A549 (cell line): ENCODE measurements at regions of chr7 and their contacts with region 1.

Region 1: DNA sequence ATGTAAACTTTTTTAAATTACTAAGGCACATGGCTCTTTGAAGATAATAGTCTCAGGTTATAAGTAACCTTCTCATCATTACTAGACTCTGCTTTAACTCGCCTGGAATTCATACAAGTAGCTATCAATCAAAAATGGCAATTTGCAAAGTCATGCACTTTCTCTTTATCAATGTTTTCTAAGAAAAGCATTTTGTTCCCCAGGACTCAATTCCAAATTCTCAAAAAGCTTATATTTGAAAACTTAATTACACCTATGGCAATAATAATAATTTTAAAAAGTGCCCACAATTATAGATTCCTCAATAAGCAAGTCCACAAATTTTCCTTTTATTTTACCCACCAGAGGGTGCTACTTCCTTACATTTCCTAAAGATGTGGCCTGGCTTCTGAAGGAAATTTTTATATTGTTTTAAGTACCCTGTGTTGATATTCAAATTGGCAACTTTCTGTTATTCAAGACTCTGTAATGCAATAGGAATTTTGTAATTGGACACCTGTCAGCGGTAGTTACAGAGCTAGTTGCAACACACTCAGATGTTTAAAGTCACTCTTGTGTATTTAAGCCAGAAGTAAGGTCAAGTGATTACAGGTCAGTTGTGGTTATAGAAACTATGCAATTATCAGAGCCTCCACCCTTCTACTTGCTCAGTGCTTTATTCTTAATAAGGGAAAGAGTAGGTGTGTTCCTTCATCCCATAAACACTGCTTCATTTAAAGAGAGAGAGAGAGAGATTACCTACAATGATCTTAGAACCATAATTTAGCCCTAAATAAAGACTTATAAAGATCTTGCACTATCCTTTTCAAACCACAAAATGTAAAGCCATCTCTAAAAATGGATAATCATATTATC is 47.1 kb upstream of the HYAL4 start:
- DNase-seq: peak; percentile 7 to 54
- ATAC-seq: peak; percentile 66 to 86
- H3K4me3 ChIP-seq: no peak overlapping the region
- H3K27ac ChIP-seq: no peak overlapping the region
- H3K4me1 ChIP-seq: peaks cover 4% of the 10 kb centered on the region; the same call in 1 of the 3 replicates
- CTCF ChIP-seq: peak; percentile 87
- EP300 ChIP-seq: no peak
- POLR2A ChIP-seq: no peak
- RAD21 ChIP-seq: peak; percentile 81 to 89

Region 2: GRCh38 chr7:123748734-123749536 is 49.0 kb before region 1 on chr7 and contains the start of gene WASL:
- CTCF ChIA-PET with region 1: interaction called, 12 read pairs
- POLR2A ChIA-PET with region 1: no interaction called
- DNase-seq: peak; percentile 73 to 94
- ATAC-seq: peak; percentile 80 to 88
- H3K4me3 ChIP-seq: peak within 1 kb of the TSS; percentile 97
- H3K27ac ChIP-seq: peak within 1 kb of the TSS; percentile 94 to 96
- H3K4me1 ChIP-seq: peaks cover 39% of the 10 kb centered on the region
- CTCF ChIP-seq: no peak
- EP300 ChIP-seq: no peak
- POLR2A ChIP-seq: peak; percentile 58
- RAD21 ChIP-seq: peak in 1 of 2 experiments; percentile 21; a peak in 1 of 5 replicates
- polyA plus RNA-seq, gene WASL: 18.5 and 21.2 TPM in 2 replicates

Region 3: DNA sequence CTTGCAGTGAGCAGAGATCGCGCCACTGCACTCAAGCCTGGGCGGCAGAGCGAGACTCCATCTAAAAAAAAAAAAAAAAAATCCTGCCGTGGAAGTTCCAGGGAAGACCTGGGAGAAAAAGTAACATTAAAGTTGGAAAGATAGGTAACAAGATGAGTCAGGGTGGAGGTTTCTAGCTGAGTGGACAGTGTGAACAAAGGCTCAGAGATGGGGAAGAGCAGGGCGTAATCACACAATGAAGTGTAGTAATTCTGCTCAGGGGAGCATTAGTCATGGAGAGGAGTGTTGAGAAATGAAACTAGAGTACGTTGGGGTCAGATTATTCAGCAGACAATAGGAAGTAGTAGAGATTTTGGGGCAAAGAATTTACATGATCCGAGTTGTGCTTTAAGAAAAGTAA is 27.5 kb before region 1 on chr7:
- CTCF ChIA-PET with region 1: interaction called, 11 read pairs
- POLR2A ChIA-PET with region 1: no interaction called
- DNase-seq: peak; percentile 84 to 86
- ATAC-seq: peak; percentile 90 to 96
- H3K4me3 ChIP-seq: peak overlapping the region; percentile 10; the same call in 1 of the 3 replicates
- H3K27ac ChIP-seq: peak overlapping the region; percentile 53 to 80
- H3K4me1 ChIP-seq: peaks cover 60% of the 10 kb centered on the region
- CTCF ChIP-seq: no peak
- EP300 ChIP-seq: peak in 1 of 2 experiments; percentile 32; a peak in 1 of 5 replicates
- POLR2A ChIP-seq: no peak
- RAD21 ChIP-seq: no peak; a peak in 1 of 5 replicates

Region 4: GRCh38 chr7:123787220-123788007 is 10.5 kb before region 1 on chr7:
- CTCF ChIA-PET with region 1: interaction called, 10 read pairs
- POLR2A ChIA-PET with region 1: no interaction called
- DNase-seq: no peak
- ATAC-seq: 0 out of 6 replicates have a peak, but pooled peaks of 1 of the 2 experiments have one; percentile 43
- H3K4me3 ChIP-seq: no peak overlapping the region
- H3K27ac ChIP-seq: no peak overlapping the region; a peak in 1 of 6 replicates
- H3K4me1 ChIP-seq: peaks cover 4% of the 10 kb centered on the region; the same call in 1 of the 3 replicates
- CTCF ChIP-seq: no peak
- EP300 ChIP-seq: no peak
- POLR2A ChIP-seq: no peak
- RAD21 ChIP-seq: no peak

Region 5: DNA sequence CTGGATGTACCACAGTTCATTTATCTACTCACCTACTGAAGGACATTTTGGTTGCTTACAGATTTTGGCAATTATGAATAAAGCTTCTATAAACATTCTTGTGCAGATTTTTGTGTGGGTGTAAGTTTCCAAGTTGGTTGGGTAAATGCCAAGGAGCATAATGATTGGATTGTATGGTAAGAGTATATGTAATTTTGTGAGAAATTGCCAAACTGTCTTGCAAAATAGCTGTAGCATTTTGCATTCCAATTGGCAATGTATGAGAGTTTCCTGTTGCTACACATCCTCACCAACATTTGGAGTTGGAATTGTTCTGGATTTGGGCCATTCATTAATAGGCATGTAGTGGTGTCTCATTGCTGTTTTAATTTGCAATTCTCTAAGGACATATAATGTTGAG is 13.2 kb after region 1 on chr7:
- CTCF ChIA-PET with region 1: interaction called, 13 read pairs
- POLR2A ChIA-PET with region 1: no interaction called
- DNase-seq: no peak
- ATAC-seq: no peak
- H3K4me3 ChIP-seq: no peak overlapping the region
- H3K27ac ChIP-seq: no peak overlapping the region
- H3K4me1 ChIP-seq: no peaks in the 10 kb centered on the region
- CTCF ChIP-seq: no peak
- EP300 ChIP-seq: no peak
- POLR2A ChIP-seq: no peak
- RAD21 ChIP-seq: no peak

Region 6: GRCh38 chr7:123846216-123846891 is 48.5 kb after region 1 on chr7:
- CTCF ChIA-PET with region 1: interaction called, 12 read pairs
- POLR2A ChIA-PET with region 1: no interaction called
- DNase-seq: peak in 1 of 2 experiments; percentile 33
- ATAC-seq: peak; percentile 68 to 84; a peak in 4 of 6 replicates
- H3K4me3 ChIP-seq: no peak overlapping the region
- H3K27ac ChIP-seq: no peak overlapping the region
- H3K4me1 ChIP-seq: 0 out of 3 replicates have a peak, but pooled peaks cover 5% of the 10 kb centered on the region
- CTCF ChIP-seq: no peak
- EP300 ChIP-seq: no peak
- POLR2A ChIP-seq: no peak
- RAD21 ChIP-seq: no peak